Naive thymus-derived CD4-positive, alpha-beta T cell (primary cell): ENCODE measurements at regions of chr20 and their contacts with region 1.

Region 1: DNA sequence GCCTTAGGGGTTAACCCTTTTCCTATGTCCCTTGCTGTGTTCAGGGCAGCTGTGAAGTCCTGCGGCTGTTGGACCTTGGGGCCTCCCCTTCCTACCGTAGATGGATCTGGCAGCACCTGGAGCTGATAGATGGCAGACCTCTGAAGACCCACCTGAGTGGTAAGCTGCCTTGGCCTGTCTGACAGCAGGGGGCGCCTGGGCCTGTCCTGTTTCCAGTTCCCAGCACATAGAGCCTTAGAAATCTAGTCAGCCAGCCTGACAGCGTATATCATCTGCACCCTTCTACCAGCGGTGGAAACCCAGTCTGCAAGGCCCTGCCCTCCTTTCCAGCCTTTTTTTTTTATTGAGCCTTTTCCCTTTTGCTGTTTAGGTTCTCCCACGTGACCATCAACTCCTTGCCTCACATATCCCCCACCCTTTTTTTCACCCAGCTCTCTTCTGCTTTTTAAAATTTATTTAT is 26.6 kb downstream of the CNBD2 start:
- DNase-seq: peak; percentile 59 to 82 (median 76)
- ATAC-seq: peak; percentile 91
- H3K4me3 ChIP-seq: no peak overlapping the region
- H3K4me3 Mint-ChIP-seq: no peak overlapping the region
- H3K27ac ChIP-seq: no peak overlapping the region
- H3K27ac Mint-ChIP-seq: peak overlapping the region in 2 of 9 donors; percentile 36 to 52
- H3K4me1 ChIP-seq: no peaks in the 10 kb centered on the region
- H3K4me1 Mint-ChIP-seq: peaks cover 4 to 13% (median 5%) of the 10 kb centered on the region in 7 donors
- H3K27me3 ChIP-seq: no peaks in the 10 kb centered on the region
- H3K27me3 Mint-ChIP-seq: peaks cover 0 to 9% (median 4%) of the 10 kb centered on the region in 5 donors

Region 2: DNA sequence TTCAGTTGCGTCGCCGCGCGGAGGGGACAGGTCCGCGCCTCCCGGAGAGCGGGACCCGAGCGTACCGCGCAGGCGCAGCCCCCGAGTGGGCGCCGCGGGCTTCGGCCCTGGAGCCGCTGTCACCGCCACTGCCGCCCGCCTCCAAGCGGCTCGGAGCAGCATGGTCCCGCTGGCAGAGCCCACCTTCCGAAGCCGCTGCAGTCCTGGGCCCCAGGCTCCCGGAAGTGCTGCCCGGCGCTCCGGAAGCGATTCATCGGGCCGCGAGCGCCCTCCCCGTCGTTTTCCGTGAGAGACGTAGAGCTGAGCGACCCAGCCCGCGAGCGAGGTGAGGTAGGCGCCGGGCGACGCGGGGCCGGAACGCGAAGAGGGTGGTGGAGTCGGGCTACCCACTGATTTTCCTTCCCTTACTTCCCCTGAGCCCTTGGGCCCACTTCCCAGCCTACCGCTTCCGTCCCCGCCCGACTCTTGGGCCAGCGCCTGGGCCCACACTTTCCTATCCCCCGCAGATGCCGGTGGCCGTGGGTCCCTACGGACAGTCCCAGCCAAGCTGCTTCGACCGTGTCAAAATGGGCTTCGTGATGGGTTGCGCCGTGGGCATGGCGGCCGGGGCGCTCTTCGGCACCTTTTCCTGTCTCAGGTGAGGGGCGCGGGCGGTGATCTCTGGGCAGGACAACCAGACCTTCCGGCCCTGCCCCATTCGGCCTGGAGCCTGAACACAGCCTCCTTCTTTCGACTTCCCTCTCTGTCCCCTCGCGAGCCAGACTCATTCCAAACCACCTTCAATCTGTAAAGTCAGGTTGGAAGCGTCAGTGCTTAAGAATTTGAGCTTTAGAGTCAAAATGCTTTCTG is 295.7 kb before region 1 on chr20 and contains the starts of genes NFS1 and ROMO1:
- CTCF ChIA-PET with region 1: no interaction called
- POLR2A ChIA-PET with region 1: no interaction called
- intact Hi-C with region 1: no loop called
- DNase-seq: peak; percentile 71 to 87 (median 82)
- ATAC-seq: peak; percentile 92
- H3K4me3 ChIP-seq: peak within 1 kb of the TSS; percentile 89
- H3K4me3 Mint-ChIP-seq: peak within 1 kb of the TSS; percentile 90 to 99 (median 98)
- H3K27ac ChIP-seq: peak within 1 kb of the TSS; percentile 87
- H3K27ac Mint-ChIP-seq: peak within 1 kb of the TSS; percentile 95 to 99 (median 97)
- H3K4me1 ChIP-seq: peaks cover 13 to 16% of the 10 kb centered on the region in 2 donors
- H3K4me1 Mint-ChIP-seq: peaks cover 15 to 66% (median 52%) of the 10 kb centered on the region in 7 donors
- H3K27me3 ChIP-seq: no peaks in the 10 kb centered on the region
- H3K27me3 Mint-ChIP-seq: no peaks in the 10 kb centered on the region
- total RNA-seq, gene NFS1: 18.2 to 41.1 (median 35.0) TPM
- total RNA-seq, gene ROMO1: 33.2 to 85.5 (median 38.5) TPM

Region 3: DNA sequence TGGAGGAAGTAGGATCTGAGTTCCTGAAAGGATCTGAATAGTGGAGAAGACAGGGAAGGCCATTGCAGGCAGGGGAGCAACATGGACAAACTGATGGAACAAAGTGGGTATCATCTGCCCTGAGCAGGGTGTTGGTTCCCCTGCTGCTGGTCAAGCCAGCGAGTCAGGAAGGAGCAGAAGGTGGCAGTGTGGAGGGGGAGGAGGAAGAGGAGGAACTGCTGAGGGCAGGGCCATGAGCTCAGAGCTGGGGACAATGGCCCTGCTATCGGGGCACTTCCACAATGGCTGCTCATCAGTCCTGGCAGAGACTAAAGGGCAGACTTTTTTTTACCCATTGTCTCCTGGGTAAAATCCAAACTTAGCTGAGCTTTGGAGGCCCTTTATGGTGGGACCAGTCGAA is 13.1 kb before region 1 on chr20:
- CTCF ChIA-PET with region 1: interaction called, 14 read pairs
- POLR2A ChIA-PET with region 1: interaction called, 3 read pairs
- intact Hi-C with region 1: no loop called
- DNase-seq: no peak
- ATAC-seq: no peak
- H3K4me3 ChIP-seq: no peak overlapping the region
- H3K4me3 Mint-ChIP-seq: no peak overlapping the region
- H3K27ac ChIP-seq: no peak overlapping the region
- H3K27ac Mint-ChIP-seq: no peak overlapping the region
- H3K4me1 ChIP-seq: no peaks in the 10 kb centered on the region
- H3K4me1 Mint-ChIP-seq: peaks cover 0 to 9% (median 0%) of the 10 kb centered on the region in 7 donors
- H3K27me3 ChIP-seq: no peaks in the 10 kb centered on the region
- H3K27me3 Mint-ChIP-seq: peaks cover 0 to 8% (median 0%) of the 10 kb centered on the region in 5 donors

Region 4: DNA sequence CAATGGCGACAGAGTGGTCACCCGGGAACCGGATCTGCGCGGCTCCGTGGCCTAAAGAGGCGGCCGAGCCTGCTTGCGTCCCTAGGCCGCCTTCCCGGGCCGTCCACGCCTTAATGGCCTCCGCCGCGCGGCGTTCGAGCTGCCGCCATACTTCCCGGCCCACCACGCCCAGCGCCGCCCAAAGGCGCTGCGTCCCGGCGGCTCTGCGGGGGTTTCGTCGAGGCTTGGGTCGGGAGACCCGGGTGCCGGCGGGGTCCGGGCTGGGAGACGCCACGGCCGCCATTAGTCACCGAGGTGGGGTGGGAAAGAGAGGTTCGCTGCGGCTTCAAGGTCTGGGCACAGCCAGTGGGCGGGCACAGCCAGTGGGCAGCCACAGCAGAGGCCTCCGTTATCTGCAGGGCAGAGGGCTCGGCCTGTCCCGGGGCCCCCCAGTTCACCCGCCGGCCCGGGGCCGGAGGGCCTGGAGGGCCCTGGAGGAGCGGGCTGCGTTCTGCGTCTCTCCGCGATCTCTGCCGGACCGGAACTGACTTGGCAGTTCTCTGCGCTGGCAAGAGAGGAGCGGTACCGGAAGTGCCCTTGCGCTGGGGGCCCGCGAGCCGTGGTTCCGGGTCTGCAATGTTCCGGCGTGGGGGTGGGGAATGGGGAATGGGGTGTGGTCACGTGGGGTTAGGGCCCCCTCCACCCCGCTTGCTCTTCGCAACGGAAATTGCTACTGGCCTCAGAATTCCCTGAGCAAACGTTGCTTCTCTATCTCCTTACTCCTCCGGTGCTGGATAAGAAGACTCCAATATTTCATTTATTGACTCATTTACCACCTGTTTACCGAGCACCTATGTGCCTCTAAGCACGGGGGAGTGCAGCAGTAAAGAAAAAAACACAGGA is 55.7 kb after region 1 on chr20:
- CTCF ChIA-PET with region 1: no interaction called
- POLR2A ChIA-PET with region 1: no interaction called
- intact Hi-C with region 1: loop called in 1 of 2 experiments (anchors 1 kb)
- DNase-seq: peak; percentile 72 to 89 (median 83)
- ATAC-seq: peak; percentile 97
- H3K4me3 ChIP-seq: peak overlapping the region; percentile 91
- H3K4me3 Mint-ChIP-seq: peak overlapping the region; percentile 86 to 98 (median 92)
- H3K27ac ChIP-seq: peak overlapping the region; percentile 91
- H3K27ac Mint-ChIP-seq: peak overlapping the region; percentile 85 to 96 (median 92)
- H3K4me1 ChIP-seq: peaks cover 6 to 12% of the 10 kb centered on the region in 2 donors
- H3K4me1 Mint-ChIP-seq: peaks cover 35 to 55% (median 49%) of the 10 kb centered on the region in 7 donors
- H3K27me3 ChIP-seq: no peaks in the 10 kb centered on the region
- H3K27me3 Mint-ChIP-seq: peaks cover 0 to 14% (median 3%) of the 10 kb centered on the region in 5 donors

Region 5: DNA sequence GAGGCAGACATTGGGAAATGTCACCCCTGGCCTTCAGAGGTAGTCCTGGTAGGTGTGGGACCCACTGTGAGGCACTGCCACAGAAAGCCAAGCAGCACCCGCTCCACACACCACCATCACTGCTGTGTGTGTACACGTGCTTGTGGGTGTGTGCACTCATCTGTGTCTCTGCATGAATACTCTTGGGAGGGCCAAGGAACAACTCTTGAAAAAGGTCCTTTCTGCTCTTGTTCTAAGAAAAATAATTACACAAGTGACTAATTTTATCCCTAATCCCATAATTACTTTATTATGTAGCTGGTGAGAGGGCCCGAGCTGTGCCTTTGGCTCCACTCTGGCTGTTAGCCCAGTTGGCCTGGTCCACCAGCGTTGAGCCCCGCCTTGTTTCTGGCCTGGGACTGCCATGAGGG is 137.8 kb after region 1 on chr20:
- CTCF ChIA-PET with region 1: interaction called, 257 read pairs
- POLR2A ChIA-PET with region 1: interaction called, 10 read pairs
- intact Hi-C with region 1: loop called (anchors 1 kb)
- DNase-seq: no peak
- ATAC-seq: no peak
- H3K4me3 ChIP-seq: no peak overlapping the region
- H3K4me3 Mint-ChIP-seq: no peak overlapping the region
- H3K27ac ChIP-seq: no peak overlapping the region
- H3K27ac Mint-ChIP-seq: no peak overlapping the region
- H3K4me1 ChIP-seq: no peaks in the 10 kb centered on the region
- H3K4me1 Mint-ChIP-seq: no peaks in the 10 kb centered on the region
- H3K27me3 ChIP-seq: no peaks in the 10 kb centered on the region
- H3K27me3 Mint-ChIP-seq: peaks cover 0 to 2% (median 0%) of the 10 kb centered on the region in 5 donors

Region 6: GRCh38 chr20:36145877-36146707 is 151.1 kb after region 1 on chr20:
- CTCF ChIA-PET with region 1: interaction called, 15 read pairs
- POLR2A ChIA-PET with region 1: no interaction called
- intact Hi-C with region 1: no loop called
- DNase-seq: no peak
- ATAC-seq: no peak
- H3K4me3 ChIP-seq: no peak overlapping the region
- H3K4me3 Mint-ChIP-seq: no peak overlapping the region
- H3K27ac ChIP-seq: no peak overlapping the region
- H3K27ac Mint-ChIP-seq: peak overlapping the region in 1 of 9 donors; percentile 9
- H3K4me1 ChIP-seq: no peaks in the 10 kb centered on the region
- H3K4me1 Mint-ChIP-seq: peaks cover 0 to 4% (median 0%) of the 10 kb centered on the region in 7 donors
- H3K27me3 ChIP-seq: no peaks in the 10 kb centered on the region
- H3K27me3 Mint-ChIP-seq: peaks cover 9 to 24% (median 17%) of the 10 kb centered on the region in 5 donors

Region 7: GRCh38 chr20:36199345-36200257 is 204.6 kb after region 1 on chr20:
- CTCF ChIA-PET with region 1: interaction called, 5 read pairs
- POLR2A ChIA-PET with region 1: no interaction called
- intact Hi-C with region 1: loop called (anchors 1 kb)
- DNase-seq: peak; percentile 31 to 74 (median 57)
- ATAC-seq: peak; percentile 83
- H3K4me3 ChIP-seq: no peak overlapping the region
- H3K4me3 Mint-ChIP-seq: no peak overlapping the region
- H3K27ac ChIP-seq: no peak overlapping the region
- H3K27ac Mint-ChIP-seq: no peak overlapping the region
- H3K4me1 ChIP-seq: peaks cover 0 to 5% of the 10 kb centered on the region in 2 donors
- H3K4me1 Mint-ChIP-seq: peaks cover 3 to 6% (median 5%) of the 10 kb centered on the region in 7 donors
- H3K27me3 ChIP-seq: no peaks in the 10 kb centered on the region
- H3K27me3 Mint-ChIP-seq: peaks cover 9 to 21% (median 12%) of the 10 kb centered on the region in 5 donors

Region 8: GRCh38 chr20:36439040-36439730 is 444.2 kb after region 1 on chr20:
- CTCF ChIA-PET with region 1: interaction called, 6 read pairs
- POLR2A ChIA-PET with region 1: no interaction called
- intact Hi-C with region 1: loop called (anchors 1 to 2 kb)
- DNase-seq: peak in 8 of 9 donors; percentile 41 to 73 (median 50)
- ATAC-seq: peak; percentile 51
- H3K4me3 ChIP-seq: no peak overlapping the region
- H3K4me3 Mint-ChIP-seq: no peak overlapping the region
- H3K27ac ChIP-seq: no peak overlapping the region
- H3K27ac Mint-ChIP-seq: no peak overlapping the region
- H3K4me1 ChIP-seq: no peaks in the 10 kb centered on the region
- H3K4me1 Mint-ChIP-seq: peaks cover 0 to 8% (median 4%) of the 10 kb centered on the region in 7 donors
- H3K27me3 ChIP-seq: no peaks in the 10 kb centered on the region
- H3K27me3 Mint-ChIP-seq: peaks cover 0 to 15% (median 5%) of the 10 kb centered on the region in 5 donors